ENCODE measurements at regions of chr4 and their contacts with region 1.

Region 1: GRCh38 chr4:154506253-154506652 is 14.7 kb upstream of the DCHS2 start:
- DNase-seq: peak; percentile 29 to 72 (median 42)
- ATAC-seq: peak; percentile 84
- H3K4me3 ChIP-seq: no peak overlapping the region
- H3K27ac ChIP-seq: no peak overlapping the region
- H3K4me1 ChIP-seq: no peaks in the 10 kb centered on the region
- H3K27me3 ChIP-seq: no peaks in the 10 kb centered on the region
- CTCF ChIP-seq: peak; percentile 62 to 81 (median 73)
- EP300 ChIP-seq: no peak
- POLR2A ChIP-seq: no peak
- RAD21 ChIP-seq: peak; percentile 86 to 88

Region 2: DNA sequence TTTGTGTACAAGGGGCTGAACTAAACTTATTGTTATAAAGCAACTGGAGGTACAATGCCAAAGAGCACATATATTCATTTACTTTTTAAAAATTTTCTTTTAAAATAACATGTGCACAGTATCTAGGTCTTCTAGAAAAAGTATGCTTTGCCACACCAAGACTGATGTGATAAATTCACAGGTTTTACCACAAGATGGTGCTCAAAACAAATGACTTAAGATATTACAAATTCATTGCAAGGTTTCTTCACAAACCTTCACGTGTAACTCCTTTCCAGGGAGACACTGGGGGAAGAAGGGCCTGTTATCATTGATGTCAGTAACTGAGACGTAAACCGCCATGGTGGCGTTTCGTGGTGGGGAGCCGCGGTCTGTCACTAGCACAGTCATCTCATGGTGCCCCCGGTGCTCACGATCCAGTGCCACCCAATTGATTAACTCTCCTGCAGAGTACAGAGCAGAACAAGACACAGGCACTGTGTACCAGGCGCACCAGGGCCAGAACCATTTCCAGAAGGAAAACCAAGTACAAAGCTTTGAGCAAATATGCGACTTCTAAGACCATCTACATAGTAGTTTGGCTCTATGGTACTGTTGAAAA is 176.9 kb before region 1 on chr4:
- CTCF ChIA-PET with region 1: interaction called, 6 read pairs
- POLR2A ChIA-PET with region 1: no interaction called
- in situ Hi-C with region 1: no loop called
- intact Hi-C with region 1: loop called (anchors 1 kb)
- DNase-seq: peak in 2 of 4 experiments; percentile 11 to 53
- ATAC-seq: peak; percentile 83
- H3K4me3 ChIP-seq: no peak overlapping the region
- H3K27ac ChIP-seq: no peak overlapping the region
- H3K4me1 ChIP-seq: peaks cover 0 to 6% of the 10 kb centered on the region in 2 experiments; a peak in 1 of 5 replicates
- H3K27me3 ChIP-seq: no peaks in the 10 kb centered on the region; a peak in 1 of 5 replicates
- CTCF ChIP-seq: peak; percentile 35 to 60 (median 49); a peak in 4 of 6 replicates
- EP300 ChIP-seq: no peak
- POLR2A ChIP-seq: no peak
- RAD21 ChIP-seq: peak in 1 of 2 experiments; percentile 63; a peak in 3 of 4 replicates

Region 3: DNA sequence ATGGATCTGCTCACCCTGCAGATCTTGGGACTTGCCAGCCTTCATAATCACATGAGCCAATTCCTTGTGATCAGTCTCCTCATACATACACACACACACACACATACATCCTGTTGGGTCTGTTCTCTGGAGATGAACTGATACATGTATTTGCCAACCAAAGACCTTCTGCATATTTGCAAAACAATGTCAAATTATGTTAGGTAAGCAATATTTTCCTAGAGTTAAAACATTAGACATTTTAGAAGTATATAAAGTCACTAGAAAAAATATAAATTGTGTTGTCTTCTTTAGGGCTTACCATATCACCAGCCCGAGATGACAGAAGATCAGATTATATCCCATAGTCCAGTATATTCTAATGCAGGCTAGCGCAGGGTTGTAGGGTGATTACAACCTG is 170.7 kb before region 1 on chr4:
- CTCF ChIA-PET with region 1: no interaction called
- POLR2A ChIA-PET with region 1: no interaction called
- in situ Hi-C with region 1: loop called (anchors 5 kb)
- intact Hi-C with region 1: no loop called
- DNase-seq: no peak
- ATAC-seq: no peak
- H3K4me3 ChIP-seq: no peak overlapping the region
- H3K27ac ChIP-seq: no peak overlapping the region
- H3K4me1 ChIP-seq: peaks cover 0 to 6% of the 10 kb centered on the region in 2 experiments; a peak in 1 of 5 replicates
- H3K27me3 ChIP-seq: no peaks in the 10 kb centered on the region; a peak in 1 of 5 replicates
- CTCF ChIP-seq: no peak
- EP300 ChIP-seq: no peak
- POLR2A ChIP-seq: no peak
- RAD21 ChIP-seq: no peak

Region 4: DNA sequence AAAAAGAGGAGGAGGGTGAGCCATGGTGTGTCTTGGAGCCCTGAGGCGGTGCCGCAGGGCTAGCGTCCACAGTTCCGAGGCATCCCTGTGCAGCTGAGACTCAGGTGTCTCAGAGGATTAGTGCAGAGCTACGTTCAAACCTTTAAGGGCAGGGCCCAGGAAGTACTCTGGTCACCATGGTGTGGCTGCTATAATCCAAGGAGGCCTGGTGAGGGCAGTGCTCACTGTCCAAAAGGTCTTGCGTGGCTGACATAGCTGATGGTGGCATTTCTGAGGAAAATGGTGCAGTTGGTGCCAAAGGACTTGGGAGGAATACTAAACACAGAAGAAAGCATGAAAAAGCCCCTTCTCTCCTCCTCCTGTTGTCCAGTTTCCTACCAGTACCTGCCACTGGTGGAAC is 161.6 kb before region 1 on chr4:
- CTCF ChIA-PET with region 1: interaction called, 3 read pairs
- POLR2A ChIA-PET with region 1: interaction called, 4 read pairs
- in situ Hi-C with region 1: loop called (anchors 5 kb)
- intact Hi-C with region 1: loop called (anchors 1 kb)
- DNase-seq: peak in 2 of 4 experiments; percentile 33 to 55
- ATAC-seq: peak; percentile 97
- H3K4me3 ChIP-seq: no peak overlapping the region
- H3K27ac ChIP-seq: no peak overlapping the region
- H3K4me1 ChIP-seq: no peaks in the 10 kb centered on the region
- H3K27me3 ChIP-seq: no peaks in the 10 kb centered on the region
- CTCF ChIP-seq: peak; percentile 50 to 58 (median 55); a peak in 5 of 6 replicates
- EP300 ChIP-seq: no peak
- POLR2A ChIP-seq: no peak
- RAD21 ChIP-seq: peak; percentile 25 to 54; a peak in 3 of 4 replicates

Region 5: DNA sequence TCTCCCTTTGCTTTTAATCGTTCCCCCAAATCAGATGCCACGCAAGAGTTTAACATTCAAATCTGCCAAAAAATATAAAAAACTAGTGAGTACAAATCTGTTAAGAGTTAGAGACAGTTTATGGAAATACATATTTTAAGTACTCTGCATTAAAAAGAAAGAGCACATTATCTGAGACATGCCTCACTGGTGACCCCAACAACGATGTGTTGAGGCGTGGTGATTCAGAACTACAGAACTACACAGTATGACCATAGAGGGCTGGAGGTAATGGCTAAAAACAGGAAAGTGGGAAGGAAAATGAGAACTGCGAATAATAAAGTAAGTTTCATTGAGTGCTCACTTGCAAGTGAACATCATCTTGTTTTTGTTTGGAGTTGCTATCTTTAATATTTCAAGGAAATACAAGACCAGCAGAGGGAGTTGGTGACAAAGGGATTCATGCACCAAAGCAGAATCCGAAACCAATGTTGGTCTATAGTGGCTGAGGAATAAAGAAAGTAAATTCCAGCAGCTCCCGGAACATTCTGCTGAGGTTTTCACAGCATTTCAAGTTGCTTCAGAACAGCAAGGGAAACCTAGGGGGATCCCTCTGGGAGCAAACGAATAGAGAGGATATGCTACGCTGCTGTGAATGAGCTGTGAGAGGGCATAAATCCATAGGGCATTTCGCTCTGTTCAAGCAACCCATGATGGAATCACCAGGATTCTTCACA is 106.8 kb before region 1 on chr4:
- CTCF ChIA-PET with region 1: interaction called, 24 read pairs
- POLR2A ChIA-PET with region 1: no interaction called
- in situ Hi-C with region 1: loop called (anchors 5 kb)
- intact Hi-C with region 1: loop called (anchors 1 kb)
- DNase-seq: peak in 2 of 4 experiments; percentile 31 to 63
- ATAC-seq: peak; percentile 85
- H3K4me3 ChIP-seq: no peak overlapping the region
- H3K27ac ChIP-seq: no peak overlapping the region
- H3K4me1 ChIP-seq: no peaks in the 10 kb centered on the region; a peak in 1 of 5 replicates
- H3K27me3 ChIP-seq: no peaks in the 10 kb centered on the region
- CTCF ChIP-seq: peak; percentile 38 to 74 (median 53); a peak in 4 of 6 replicates
- EP300 ChIP-seq: no peak
- POLR2A ChIP-seq: no peak
- RAD21 ChIP-seq: peak; percentile 72 to 79

Region 6: GRCh38 chr4:154416190-154416547 is 90.1 kb before region 1 on chr4:
- CTCF ChIA-PET with region 1: no interaction called
- POLR2A ChIA-PET with region 1: no interaction called
- in situ Hi-C with region 1: no loop called
- intact Hi-C with region 1: loop called (anchors 2 kb)
- DNase-seq: peak; percentile 10 to 68 (median 31)
- ATAC-seq: peak; percentile 80
- H3K4me3 ChIP-seq: peak overlapping the region; percentile 41
- H3K27ac ChIP-seq: peak overlapping the region; percentile 65
- H3K4me1 ChIP-seq: peaks cover 0 to 8% of the 10 kb centered on the region in 2 experiments; a peak in 4 of 5 replicates
- H3K27me3 ChIP-seq: no peaks in the 10 kb centered on the region
- CTCF ChIP-seq: peak; percentile 27 to 47 (median 32); a peak in 4 of 6 replicates
- EP300 ChIP-seq: no peak
- POLR2A ChIP-seq: no peak
- RAD21 ChIP-seq: no peak; a peak in 1 of 4 replicates

Region 7: DNA sequence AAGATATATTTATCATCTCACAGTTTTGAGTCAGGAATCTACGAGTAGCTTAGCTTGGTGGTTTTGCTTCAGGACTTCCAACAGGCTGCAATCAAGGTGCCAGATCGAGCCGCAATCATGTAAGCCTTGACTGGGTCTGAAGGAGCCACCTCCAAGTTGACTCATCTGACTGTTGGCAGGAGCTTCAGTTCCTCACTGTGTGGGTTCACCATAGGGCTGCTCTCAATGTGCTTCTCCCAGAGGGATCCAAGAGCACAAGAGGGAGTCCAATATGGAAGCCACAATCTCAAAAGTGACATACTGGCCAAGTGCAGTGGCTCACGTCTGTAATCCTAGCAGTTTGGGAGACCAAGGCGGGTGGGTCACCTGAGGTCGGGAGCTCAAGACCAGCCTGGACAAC is 41.2 kb before region 1 on chr4:
- CTCF ChIA-PET with region 1: no interaction called
- POLR2A ChIA-PET with region 1: no interaction called
- in situ Hi-C with region 1: no loop called
- intact Hi-C with region 1: loop called (anchors 5 kb)
- DNase-seq: peak in 3 of 4 experiments; percentile 24 to 69 (median 46)
- ATAC-seq: peak; percentile 68
- H3K4me3 ChIP-seq: peak overlapping the region; percentile 31; the same call in 1 of the 2 replicates
- H3K27ac ChIP-seq: peak overlapping the region; percentile 83
- H3K4me1 ChIP-seq: peaks cover 0 to 20% of the 10 kb centered on the region in 2 experiments; a peak in 3 of 5 replicates
- H3K27me3 ChIP-seq: no peaks in the 10 kb centered on the region
- CTCF ChIP-seq: no peak
- EP300 ChIP-seq: no peak
- POLR2A ChIP-seq: no peak
- RAD21 ChIP-seq: no peak

Region 8: GRCh38 chr4:154551872-154552686 is 45.8 kb after region 1 on chr4:
- CTCF ChIA-PET with region 1: no interaction called
- POLR2A ChIA-PET with region 1: no interaction called
- in situ Hi-C with region 1: no loop called
- intact Hi-C with region 1: no loop called
- DNase-seq: peak; percentile 62 to 85 (median 70)
- ATAC-seq: peak; percentile 76
- H3K4me3 ChIP-seq: no peak overlapping the region
- H3K27ac ChIP-seq: 0 out of 3 replicates have a peak overlapping the region, but pooled peaks have one; percentile 18
- H3K4me1 ChIP-seq: peaks cover 0 to 7% of the 10 kb centered on the region in 2 experiments; a peak in 1 of 5 replicates
- H3K27me3 ChIP-seq: no peaks in the 10 kb centered on the region
- CTCF ChIP-seq: peak; percentile 80 to 87 (median 81)
- EP300 ChIP-seq: no peak
- POLR2A ChIP-seq: no peak
- RAD21 ChIP-seq: peak; percentile 77 to 83

Measured in K562 (cell line).